ENCODE measurements at regions of chr11 and their contacts with region 1.

Region 1: GRCh38 chr11:61834278-61835048 is 6.4 kb downstream of the FADS2 start:
- DNase-seq: peak; percentile 77
- H3K4me3 Mint-ChIP-seq: peak overlapping the region; percentile 78
- H3K27ac Mint-ChIP-seq: peak overlapping the region; percentile 99
- H3K4me1 Mint-ChIP-seq: peaks cover 56% of the 10 kb centered on the region
- H3K27me3 Mint-ChIP-seq: no peaks in the 10 kb centered on the region

Region 2: GRCh38 chr11:61806785-61807184 is 27.7 kb before region 1 on chr11:
- intact Hi-C with region 1: no loop called
- DNase-seq: no peak
- H3K4me3 Mint-ChIP-seq: no peak overlapping the region
- H3K27ac Mint-ChIP-seq: no peak overlapping the region
- H3K4me1 Mint-ChIP-seq: peaks cover 4% of the 10 kb centered on the region
- H3K27me3 Mint-ChIP-seq: no peaks in the 10 kb centered on the region

Region 3: GRCh38 chr11:61816736-61817455 is 17.6 kb before region 1 on chr11 and contains the start of gene FADS1:
- intact Hi-C with region 1: loop called (anchors 1 kb)
- DNase-seq: peak; percentile 84
- H3K4me3 Mint-ChIP-seq: peak within 1 kb of the TSS; percentile 99
- H3K27ac Mint-ChIP-seq: peak within 1 kb of the TSS; percentile 96
- H3K4me1 Mint-ChIP-seq: peaks cover 20% of the 10 kb centered on the region
- H3K27me3 Mint-ChIP-seq: no peaks in the 10 kb centered on the region
- total RNA-seq, gene FADS1: 114 and 116 TPM in 2 replicates

Region 4: DNA sequence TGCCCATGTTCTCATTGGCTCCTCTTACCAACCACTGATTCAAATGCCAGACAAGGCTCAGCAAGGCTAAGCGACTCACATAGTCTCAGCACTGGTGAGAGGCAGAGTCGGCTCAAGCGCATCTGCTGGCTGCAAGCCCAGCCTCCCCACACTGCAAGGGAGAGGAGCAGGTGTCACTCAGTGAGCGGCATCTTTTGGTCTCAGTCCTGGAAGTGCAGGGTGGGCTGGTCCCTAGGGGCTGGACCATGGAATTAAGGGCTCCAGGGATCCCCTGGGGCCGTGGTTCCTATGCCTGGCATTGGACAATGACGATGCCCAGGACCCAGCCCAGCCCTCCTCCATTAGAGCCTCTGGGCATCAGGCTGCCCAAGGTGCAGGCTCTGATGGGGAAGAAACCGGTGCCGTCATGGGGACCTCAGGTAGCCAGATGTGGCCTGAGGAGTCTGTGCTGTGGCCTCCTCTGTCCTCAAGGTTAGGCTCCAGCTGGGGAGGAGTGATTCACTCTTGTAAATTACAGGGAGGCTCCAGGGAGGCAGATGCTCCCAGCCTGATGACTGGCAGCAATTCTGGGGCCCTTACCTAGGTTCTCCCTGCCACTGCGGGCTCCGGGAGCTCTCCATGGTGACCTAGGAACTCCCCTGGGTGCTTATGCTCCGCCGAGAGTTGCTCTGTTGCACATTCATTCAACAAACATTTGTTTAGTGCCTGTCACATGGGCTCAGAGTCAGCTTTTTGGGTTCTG is 21.6 kb after region 1 on chr11:
- intact Hi-C with region 1: no loop called
- DNase-seq: no peak
- H3K4me3 Mint-ChIP-seq: no peak overlapping the region
- H3K27ac Mint-ChIP-seq: no peak overlapping the region
- H3K4me1 Mint-ChIP-seq: no peaks in the 10 kb centered on the region
- H3K27me3 Mint-ChIP-seq: no peaks in the 10 kb centered on the region

Region 5: DNA sequence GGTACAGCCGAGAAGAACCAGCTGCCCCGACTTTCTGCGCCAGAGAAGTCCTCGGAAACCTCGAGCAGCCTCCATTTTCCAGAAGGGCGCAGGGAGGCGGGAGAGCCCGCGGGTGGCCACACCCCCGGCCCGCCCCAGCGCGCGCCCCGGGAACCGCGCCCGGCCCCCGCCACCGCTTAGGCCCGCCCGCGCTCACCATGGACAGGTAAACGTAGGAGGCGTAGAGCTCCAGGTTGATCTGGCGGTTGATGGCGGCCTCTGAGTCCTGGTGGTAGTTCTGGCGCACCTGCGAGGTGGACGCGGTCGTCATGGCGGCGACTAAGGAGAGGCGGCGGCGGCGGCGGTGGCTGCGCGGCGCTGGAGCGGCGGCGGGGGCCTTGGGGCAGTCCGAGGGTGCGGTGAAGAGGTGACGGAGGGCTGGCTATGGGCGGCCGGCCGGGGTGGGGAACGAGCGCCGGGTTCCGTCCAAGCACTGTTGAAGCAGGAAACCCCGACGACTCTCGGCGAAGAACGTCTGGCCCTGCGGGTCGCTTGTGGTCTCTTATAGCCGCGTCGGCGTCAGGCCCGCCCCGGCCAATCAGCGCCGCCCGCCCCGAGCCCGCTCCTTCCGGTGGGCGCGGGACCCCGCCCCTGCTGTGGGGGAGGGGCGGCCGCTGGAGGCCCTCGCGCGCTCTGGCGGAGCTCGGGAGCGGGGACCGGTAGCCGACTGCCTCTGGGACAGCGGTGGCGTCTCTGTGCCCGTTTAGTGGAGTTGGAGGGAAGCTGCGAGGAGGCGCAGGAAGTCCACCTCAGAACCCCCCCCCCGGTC is 132.9 kb after region 1 on chr11 and contains the start of gene FTH1:
- intact Hi-C with region 1: loop called (anchors 5 kb)
- DNase-seq: peak; percentile 84
- H3K4me3 Mint-ChIP-seq: peak within 1 kb of the TSS; percentile 93
- H3K27ac Mint-ChIP-seq: peak within 1 kb of the TSS; percentile 90
- H3K4me1 Mint-ChIP-seq: peaks cover 59% of the 10 kb centered on the region
- H3K27me3 Mint-ChIP-seq: no peaks in the 10 kb centered on the region
- total RNA-seq, gene FTH1: 568 and 585 TPM in 2 replicates

Measured in activated T-helper 2 cell treated with anti-CD3 and anti-CD28 coated beads, Interferon-gamma antibody, Interleukin-2, Interleukin-4, amounts not matched to agents 10 μg/mL and 5 μg/mL and 100 μg/mL, durations not matched to agents 14 hours and 24 hours and 36 hours (primary cell).